PC-3 (cell line): ENCODE measurements at regions of chr3 and their contacts with region 1.

Region 1: DNA sequence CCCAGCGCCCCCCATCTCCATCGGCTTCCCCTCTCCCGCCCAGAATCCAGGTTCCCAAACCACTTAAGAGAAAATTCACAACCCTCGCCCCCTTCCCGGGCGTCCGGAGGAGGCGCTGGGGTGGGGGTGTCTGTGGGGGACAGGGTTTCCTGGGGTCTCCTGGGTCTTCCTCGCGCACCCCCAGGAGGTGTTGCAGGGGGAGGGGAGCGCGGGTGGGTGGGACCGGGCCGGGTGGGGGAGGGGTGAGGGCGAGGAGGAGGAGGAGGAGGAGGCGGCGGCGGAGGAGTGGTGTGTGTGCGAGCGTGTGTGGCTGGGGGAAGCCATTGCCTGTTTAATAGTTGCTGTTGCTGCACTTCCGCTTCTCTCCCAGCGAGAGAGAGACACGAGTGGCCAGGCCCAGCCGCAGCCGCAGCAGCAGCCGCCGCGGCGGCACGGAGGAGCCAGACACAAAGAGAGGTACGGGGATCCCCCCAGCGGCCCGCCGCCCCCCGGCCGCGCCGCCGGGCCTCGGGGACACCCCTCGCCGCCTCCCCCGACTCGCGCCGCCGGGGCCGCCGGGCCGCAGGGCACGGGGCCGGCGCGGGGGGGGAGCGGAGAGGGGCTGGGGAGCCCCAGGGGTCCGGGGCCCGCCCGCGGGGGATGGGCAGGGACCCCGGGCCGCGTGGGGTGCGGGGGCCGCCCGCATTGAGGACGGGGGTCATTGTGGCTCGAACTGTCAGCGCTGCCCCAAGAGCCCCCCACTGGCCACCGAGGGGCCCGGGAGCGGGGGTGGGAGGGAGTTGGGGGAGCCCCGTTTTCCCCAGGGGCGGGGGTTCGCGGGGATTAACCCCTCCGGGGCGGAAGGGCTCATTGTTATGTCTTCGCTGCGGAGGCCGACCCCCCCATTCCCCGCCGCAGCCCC is at the start of gene UBE2E1:
- DNase-seq: peak; percentile 61
- ATAC-seq: peak; percentile 35
- H3K4me3 ChIP-seq: peak within 1 kb of the TSS; percentile 90
- H3K27ac ChIP-seq: peak within 1 kb of the TSS; percentile 29
- H3K4me1 ChIP-seq: peaks cover 45% of the 10 kb centered on the region
- H3K27me3 ChIP-seq: no peaks in the 10 kb centered on the region
- CTCF ChIP-seq: no peak
- total RNA-seq, gene UBE2E1: 90.1 and 117 TPM in 2 replicates

Region 2: DNA sequence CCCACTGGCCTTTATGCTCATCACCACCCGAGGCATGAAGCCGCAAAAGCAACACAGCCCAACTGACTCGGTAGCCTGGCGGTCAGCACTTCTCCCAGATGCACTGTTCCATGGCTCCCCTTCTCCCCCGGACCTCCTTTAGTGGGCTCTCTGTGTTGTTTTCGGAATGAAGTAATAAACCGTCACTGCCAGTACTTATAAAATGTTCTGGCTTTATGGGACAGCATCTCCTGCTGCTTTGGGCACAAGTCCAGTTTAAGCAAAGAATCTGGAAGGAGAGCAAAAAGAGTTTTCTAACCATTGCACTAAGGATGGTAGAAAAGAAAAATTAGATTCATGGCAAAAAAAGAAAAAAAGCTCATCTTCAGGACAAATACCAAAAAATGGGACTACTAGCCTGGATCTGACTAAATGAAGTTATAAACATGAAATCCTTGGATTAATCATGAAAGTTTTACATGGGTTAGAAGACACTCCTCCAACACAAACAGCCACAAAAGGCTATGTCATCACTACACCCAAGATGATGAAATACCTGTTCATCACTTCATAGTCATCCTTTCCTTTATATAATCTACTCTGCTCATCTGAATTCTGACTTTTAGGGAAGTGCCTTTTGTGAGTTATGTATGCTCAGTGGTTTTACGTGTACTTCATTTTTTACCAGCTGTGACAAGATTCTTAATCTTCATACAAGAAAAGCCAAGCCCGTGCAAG is 692.3 kb before region 1 on chr3:
- CTCF ChIA-PET with region 1: no interaction called
- POLR2A ChIA-PET with region 1: no interaction called
- intact Hi-C with region 1: loop called (anchors 5 kb)
- DNase-seq: peak; percentile 89
- ATAC-seq: peak; percentile 68
- H3K4me3 ChIP-seq: peak overlapping the region; percentile 33; the same call in 1 of the 2 replicates
- H3K27ac ChIP-seq: peak overlapping the region; percentile 64
- H3K4me1 ChIP-seq: peaks cover 44% of the 10 kb centered on the region
- H3K27me3 ChIP-seq: 0 out of 2 replicates have a peak, but pooled peaks cover under 1% of the 10 kb centered on the region
- CTCF ChIP-seq: no peak

Region 3: DNA sequence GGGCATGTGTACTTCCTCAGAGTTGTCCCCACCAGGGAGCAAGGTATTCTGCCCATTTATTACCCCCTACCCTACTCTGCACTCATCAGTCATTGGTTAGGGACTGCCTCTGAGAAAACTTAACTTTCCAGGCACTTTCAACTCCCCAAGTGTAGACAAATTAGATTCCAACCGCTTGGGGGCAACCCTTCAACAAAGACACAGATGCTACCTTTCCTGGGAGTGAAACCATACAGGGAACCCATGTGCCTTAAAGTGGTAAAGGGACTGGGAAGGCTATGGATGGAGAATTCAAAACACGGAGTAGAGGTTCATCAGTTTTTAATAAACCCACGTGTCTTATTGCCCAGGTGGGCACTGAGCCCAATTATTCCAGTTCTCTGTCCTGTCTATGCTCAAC is 622.1 kb before region 1 on chr3:
- CTCF ChIA-PET with region 1: no interaction called
- POLR2A ChIA-PET with region 1: no interaction called
- intact Hi-C with region 1: loop called (anchors 5 kb)
- DNase-seq: peak; percentile 81
- ATAC-seq: peak; percentile 98
- H3K4me3 ChIP-seq: no peak overlapping the region
- H3K27ac ChIP-seq: no peak overlapping the region
- H3K4me1 ChIP-seq: no peaks in the 10 kb centered on the region
- H3K27me3 ChIP-seq: no peaks in the 10 kb centered on the region
- CTCF ChIP-seq: peak; percentile 88

Region 4: DNA sequence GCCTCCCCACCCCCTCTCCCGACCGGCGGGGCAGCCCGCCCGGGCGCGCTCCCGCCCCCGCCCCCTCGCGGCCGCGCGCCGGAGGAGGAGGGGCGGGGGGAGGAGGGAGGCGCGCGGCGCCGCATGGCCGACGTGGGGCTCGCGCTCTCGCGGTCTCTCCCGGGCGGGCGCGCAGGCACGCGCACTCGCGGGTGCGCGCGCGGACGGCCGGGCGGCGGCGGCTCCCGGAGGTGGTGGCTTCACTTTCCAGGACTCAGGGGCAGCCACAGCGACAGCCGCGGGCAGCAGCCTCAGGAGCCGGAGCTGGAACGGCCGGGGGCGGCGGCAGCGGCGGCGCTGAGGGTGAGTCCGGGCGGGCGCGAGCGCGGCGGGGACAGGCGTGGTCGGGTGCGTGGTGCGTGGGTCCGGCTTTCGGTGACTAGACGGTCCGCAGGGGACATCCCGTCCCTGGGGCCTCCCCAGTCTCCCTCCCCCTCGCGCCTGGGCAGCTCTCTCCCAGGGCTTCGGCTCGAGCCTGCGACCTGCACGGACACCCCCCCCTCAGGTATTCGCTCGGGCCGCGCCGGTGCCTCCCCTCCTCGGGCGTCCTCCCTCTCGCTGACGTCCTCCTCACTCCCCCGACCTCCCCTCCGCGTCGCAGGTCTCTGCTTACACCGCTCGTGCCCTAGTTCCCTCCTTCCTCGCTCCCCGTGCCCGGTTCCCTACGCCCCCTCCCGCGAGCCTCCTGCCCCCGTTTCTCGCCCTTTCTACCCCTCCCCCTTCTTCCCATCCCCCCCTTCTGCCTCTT is 602.8 kb before region 1 on chr3 and contains the start of gene UBE2E2:
- CTCF ChIA-PET with region 1: no interaction called
- POLR2A ChIA-PET with region 1: no interaction called
- intact Hi-C with region 1: loop called (anchors 5 kb)
- DNase-seq: peak; percentile 82
- ATAC-seq: peak; percentile 72
- H3K4me3 ChIP-seq: peak within 1 kb of the TSS; percentile 100
- H3K27ac ChIP-seq: peak within 1 kb of the TSS; percentile 52
- H3K4me1 ChIP-seq: peaks cover 12% of the 10 kb centered on the region
- H3K27me3 ChIP-seq: no peaks in the 10 kb centered on the region
- CTCF ChIP-seq: no peak
- total RNA-seq, gene UBE2E2: 25.6 and 30.9 TPM in 2 replicates

Region 5: DNA sequence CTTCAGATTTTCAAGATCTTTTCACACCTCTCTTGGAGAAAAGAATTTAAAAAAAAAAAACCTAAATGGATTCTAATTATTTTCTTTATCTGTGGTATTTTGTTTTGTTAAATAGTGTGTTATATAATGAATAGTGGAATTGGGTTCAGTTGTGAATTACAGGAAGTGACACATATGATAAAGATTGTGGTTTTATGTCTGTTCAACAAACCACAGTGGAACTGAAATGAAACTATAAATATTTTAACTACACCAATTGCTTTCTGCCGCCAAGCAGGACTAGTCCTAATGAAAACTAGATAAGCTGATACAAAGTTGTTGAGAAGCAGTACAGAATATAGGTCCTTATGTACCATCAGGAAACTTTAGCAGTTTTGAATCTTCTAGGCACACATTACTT is 481.1 kb before region 1 on chr3:
- CTCF ChIA-PET with region 1: no interaction called
- POLR2A ChIA-PET with region 1: no interaction called
- intact Hi-C with region 1: loop called (anchors 5 kb)
- DNase-seq: peak; percentile 73
- ATAC-seq: peak; percentile 76
- H3K4me3 ChIP-seq: peak overlapping the region; percentile 31
- H3K27ac ChIP-seq: peak overlapping the region; percentile 29
- H3K4me1 ChIP-seq: peaks cover 43% of the 10 kb centered on the region
- H3K27me3 ChIP-seq: no peaks in the 10 kb centered on the region
- CTCF ChIP-seq: no peak

Region 6: DNA sequence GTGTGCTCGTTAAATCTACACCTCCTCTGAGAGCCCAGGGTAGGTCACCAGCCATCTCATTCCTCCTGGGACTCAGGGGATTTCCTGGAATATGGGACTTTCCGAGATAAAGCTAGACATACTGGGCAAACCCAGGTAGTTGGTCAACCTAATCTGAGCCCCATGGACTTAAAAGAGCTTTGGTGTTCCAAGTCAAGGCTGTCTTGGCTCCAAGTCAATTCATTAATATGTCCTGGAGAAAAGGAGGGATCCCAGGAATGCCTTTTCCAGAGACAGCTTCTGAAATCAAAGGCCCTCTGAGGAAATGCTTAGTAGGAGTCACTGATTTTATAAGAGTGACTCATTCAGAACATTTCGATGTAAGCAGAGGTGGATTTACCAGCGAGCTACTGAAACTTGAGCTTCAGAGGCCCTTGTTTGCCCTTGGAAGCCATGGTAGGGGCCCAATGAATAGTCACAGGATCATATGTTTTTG is 137.4 kb before region 1 on chr3:
- CTCF ChIA-PET with region 1: no interaction called
- POLR2A ChIA-PET with region 1: no interaction called
- intact Hi-C with region 1: loop called (anchors 5 kb)
- DNase-seq: peak; percentile 97
- ATAC-seq: peak; percentile 54
- H3K4me3 ChIP-seq: peak overlapping the region; percentile 7; the same call in 1 of the 2 replicates
- H3K27ac ChIP-seq: peak overlapping the region; percentile 96
- H3K4me1 ChIP-seq: peaks cover 74% of the 10 kb centered on the region
- H3K27me3 ChIP-seq: no peaks in the 10 kb centered on the region
- CTCF ChIP-seq: no peak

Region 7: GRCh38 chr3:23865595-23866450 is 59.9 kb after region 1 on chr3:
- CTCF ChIA-PET with region 1: no interaction called
- POLR2A ChIA-PET with region 1: no interaction called
- intact Hi-C with region 1: loop called (anchors 5 kb)
- DNase-seq: peak; percentile 12
- ATAC-seq: peak; percentile 46
- H3K4me3 ChIP-seq: no peak overlapping the region
- H3K27ac ChIP-seq: no peak overlapping the region
- H3K4me1 ChIP-seq: 0 out of 2 replicates have a peak, but pooled peaks cover 9% of the 10 kb centered on the region
- H3K27me3 ChIP-seq: no peaks in the 10 kb centered on the region
- CTCF ChIP-seq: no peak

Region 8: GRCh38 chr3:24048843-24049242 is 243.0 kb after region 1 on chr3:
- CTCF ChIA-PET with region 1: no interaction called
- POLR2A ChIA-PET with region 1: no interaction called
- intact Hi-C with region 1: no loop called
- DNase-seq: no peak
- ATAC-seq: no peak
- H3K4me3 ChIP-seq: no peak overlapping the region
- H3K27ac ChIP-seq: no peak overlapping the region
- H3K4me1 ChIP-seq: peaks cover 17% of the 10 kb centered on the region
- H3K27me3 ChIP-seq: no peaks in the 10 kb centered on the region
- CTCF ChIP-seq: no peak